ENCODE measurements at regions of chr9 and their contacts with region 1.

Region 1: GRCh38 chr9:98851730-98852459 is 44.4 kb downstream of the GALNT12 start:
- DNase-seq: no peak
- H3K4me3 ChIP-seq: no peak overlapping the region
- H3K27ac ChIP-seq: no peak overlapping the region
- H3K4me1 ChIP-seq: peaks cover 24% of the 10 kb centered on the region
- H3K27me3 ChIP-seq: no peaks in the 10 kb centered on the region

Region 2: DNA sequence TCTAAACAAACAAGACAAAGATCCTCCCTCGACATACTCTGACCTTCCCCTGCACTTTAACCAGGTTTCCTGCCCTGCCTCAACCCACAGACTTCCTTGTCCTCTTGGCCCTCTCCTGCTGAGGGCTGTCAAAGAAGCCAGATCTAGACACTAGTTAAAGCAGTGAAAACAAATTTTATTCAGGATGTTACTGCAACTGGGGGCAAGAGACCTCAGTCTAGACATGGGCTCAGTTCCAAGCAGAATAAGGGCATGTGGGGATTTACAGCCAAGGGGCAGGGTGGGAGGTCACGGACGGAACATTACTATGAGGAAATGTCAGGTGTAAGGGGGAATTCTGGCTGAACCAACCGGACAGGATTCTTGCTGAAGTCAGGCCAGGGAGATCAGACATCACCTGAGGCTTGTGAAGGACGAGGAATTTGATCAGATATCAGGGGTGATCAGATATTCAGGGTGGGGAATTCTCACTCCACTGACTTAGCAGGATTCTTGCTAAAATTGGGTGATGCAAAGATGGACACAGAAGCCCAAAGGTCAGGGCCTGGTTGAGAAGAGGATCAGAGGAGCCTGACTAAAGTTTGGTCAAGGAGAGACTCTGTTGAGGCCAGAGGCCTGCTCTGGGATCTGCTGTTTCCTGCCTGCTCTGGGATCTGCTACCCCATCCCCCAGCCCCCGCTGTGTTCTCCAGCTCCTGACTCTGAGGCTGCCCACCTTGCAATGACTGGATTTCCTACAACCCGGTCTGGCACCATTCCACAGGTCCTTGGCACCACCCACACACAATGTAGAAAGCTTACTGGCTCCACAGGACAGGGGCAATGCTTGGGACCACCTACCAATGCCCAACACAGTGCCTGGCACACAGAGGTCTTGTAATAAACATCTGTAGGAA is 164.7 kb before region 1 on chr9:
- in situ Hi-C with region 1: no loop called
- DNase-seq: no peak
- H3K4me3 ChIP-seq: no peak overlapping the region
- H3K27ac ChIP-seq: 0 out of 2 replicates have a peak overlapping the region, but pooled peaks have one; percentile 16
- H3K4me1 ChIP-seq: peaks cover 11% of the 10 kb centered on the region
- H3K27me3 ChIP-seq: no peaks in the 10 kb centered on the region

Region 3: DNA sequence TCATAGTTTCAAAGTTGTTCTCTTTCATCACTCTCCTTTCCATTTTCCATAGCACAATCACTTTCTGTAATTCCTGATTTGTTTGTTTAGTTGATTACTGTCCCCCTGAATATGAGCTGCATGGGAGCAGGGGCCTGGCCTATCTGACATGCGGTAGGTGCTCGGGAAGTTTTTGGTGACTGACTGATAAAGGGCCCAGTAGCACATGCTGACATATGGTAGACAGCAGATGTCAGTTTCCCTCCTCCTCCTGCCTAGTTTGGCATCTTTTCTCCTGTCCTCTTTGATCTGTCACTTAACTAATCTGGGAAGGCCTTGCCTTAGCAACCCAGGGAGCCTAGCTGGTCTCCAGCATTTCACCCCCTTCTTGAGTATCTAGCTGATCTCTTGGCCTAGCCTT is 30.1 kb before region 1 on chr9:
- in situ Hi-C with region 1: no loop called
- DNase-seq: no peak
- H3K4me3 ChIP-seq: no peak overlapping the region
- H3K27ac ChIP-seq: no peak overlapping the region
- H3K4me1 ChIP-seq: no peaks in the 10 kb centered on the region
- H3K27me3 ChIP-seq: no peaks in the 10 kb centered on the region

Region 4: DNA sequence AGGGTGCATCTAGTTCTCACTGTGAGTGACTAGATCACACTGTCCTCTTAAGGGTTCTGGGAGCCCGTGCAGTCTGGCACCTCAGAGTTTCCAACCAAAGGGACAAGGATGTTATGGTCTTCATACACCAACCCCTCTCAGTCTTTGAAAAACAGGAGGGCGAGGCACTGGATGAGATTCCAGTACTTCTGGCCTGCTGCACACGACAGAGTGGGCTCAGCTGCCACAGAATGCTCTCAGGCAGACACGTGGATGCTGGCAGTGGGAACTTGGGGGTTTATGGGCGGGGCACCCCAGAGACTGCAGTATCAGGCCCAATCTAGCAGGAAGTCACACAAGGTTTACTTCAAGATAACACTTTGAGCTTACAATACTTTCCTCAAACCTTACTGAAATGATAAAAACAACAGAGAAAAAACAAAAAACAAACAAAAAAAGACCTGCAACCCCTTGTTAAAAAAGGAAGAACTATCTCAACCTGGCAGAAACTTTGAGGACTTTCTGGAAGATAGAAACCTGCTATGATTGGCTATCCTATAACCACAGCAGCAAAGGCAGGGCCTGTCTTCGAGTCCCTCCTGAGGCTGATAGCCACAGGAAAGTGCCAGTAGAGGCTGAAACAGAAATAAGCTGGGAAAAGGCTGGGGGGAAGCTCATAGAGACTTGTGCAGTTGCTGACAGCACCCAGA is 224.7 kb after region 1 on chr9:
- in situ Hi-C with region 1: no loop called
- DNase-seq: no peak
- H3K4me3 ChIP-seq: no peak overlapping the region
- H3K27ac ChIP-seq: no peak overlapping the region
- H3K4me1 ChIP-seq: peaks cover 11% of the 10 kb centered on the region
- H3K27me3 ChIP-seq: no peaks in the 10 kb centered on the region

Region 5: GRCh38 chr9:99130069-99130468 is 278.2 kb after region 1 on chr9:
- in situ Hi-C with region 1: loop called (anchors 10 kb)
- DNase-seq: no peak
- H3K4me3 ChIP-seq: no peak overlapping the region
- H3K27ac ChIP-seq: no peak overlapping the region
- H3K4me1 ChIP-seq: peaks cover 35% of the 10 kb centered on the region
- H3K27me3 ChIP-seq: no peaks in the 10 kb centered on the region